CD8-positive, alpha-beta T cell (primary cell): ENCODE measurements at regions of chr19 and their contacts with region 1.

Region 1: GRCh38 chr19:57527136-57527881 is at the start of gene ZNF549:
- DNase-seq: peak; percentile 77 to 95 (median 89)
- ATAC-seq: peak; percentile 98
- H3K4me3 ChIP-seq: peak within 1 kb of the TSS; percentile 97
- H3K4me3 Mint-ChIP-seq: peak within 1 kb of the TSS; percentile 94
- H3K27ac ChIP-seq: peak within 1 kb of the TSS; percentile 80 to 88
- H3K27ac Mint-ChIP-seq: peak within 1 kb of the TSS; percentile 96
- H3K4me1 ChIP-seq: peaks cover 16% of the 10 kb centered on the region
- H3K4me1 Mint-ChIP-seq: peaks cover 32% of the 10 kb centered on the region
- H3K27me3 ChIP-seq: no peaks in the 10 kb centered on the region
- H3K27me3 Mint-ChIP-seq: no peaks in the 10 kb centered on the region
- CTCF ChIP-seq: no peak
- total RNA-seq, gene ZNF549: 14.6 to 17.1 TPM

Region 2: DNA sequence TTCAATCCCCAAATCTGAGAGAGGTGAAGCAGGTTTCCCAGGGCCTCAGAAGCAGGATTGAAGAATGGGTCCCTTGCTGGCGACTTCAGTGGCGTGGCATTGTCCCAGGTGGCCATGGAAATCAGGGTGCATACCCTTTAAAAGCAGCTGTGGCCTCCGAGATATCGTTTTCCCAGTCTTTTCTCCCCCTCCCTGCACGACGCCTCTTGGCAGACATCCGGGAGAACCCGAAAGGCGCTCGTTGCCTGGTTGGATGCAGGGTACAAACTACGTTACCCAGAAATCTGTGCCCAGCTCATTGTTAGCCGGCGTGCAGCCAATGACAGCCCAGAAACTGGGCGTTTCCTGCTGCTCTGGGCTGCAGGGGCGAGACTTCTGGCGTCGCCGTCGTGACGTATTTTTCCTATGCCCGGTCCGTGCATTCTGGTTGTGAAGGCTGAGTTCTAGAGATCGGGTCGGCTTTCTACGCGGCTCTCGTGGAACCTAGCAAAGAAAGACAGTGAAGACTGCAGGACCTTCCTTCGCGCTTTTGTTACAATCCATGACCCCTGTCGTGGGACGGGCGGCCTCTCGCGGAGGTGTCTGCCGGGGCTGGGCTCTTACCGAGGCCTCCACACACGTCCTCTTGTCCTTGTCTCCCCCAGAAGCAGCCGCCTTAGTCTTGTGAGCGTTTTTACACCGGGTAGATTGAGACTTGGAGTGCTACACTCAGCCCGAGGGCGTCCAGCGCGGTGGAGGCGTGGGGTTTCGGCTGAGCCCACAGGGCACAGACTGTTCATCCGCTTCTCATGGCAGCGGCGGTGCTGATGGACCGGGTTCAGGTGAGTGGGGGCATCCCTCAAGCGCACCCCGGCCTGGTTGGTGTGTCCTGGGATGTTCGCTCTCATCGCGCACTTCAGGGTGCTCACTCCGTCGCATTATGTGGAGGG is 176.2 kb before region 1 on chr19 and contains the start of gene ZNF304:
- CTCF ChIA-PET with region 1: no interaction called
- POLR2A ChIA-PET with region 1: no interaction called
- intact Hi-C with region 1: no loop called
- DNase-seq: peak; percentile 58 to 93 (median 81)
- ATAC-seq: peak; percentile 99
- H3K4me3 ChIP-seq: peak within 1 kb of the TSS; percentile 79 to 87
- H3K4me3 Mint-ChIP-seq: peak within 1 kb of the TSS; percentile 96
- H3K27ac ChIP-seq: peak within 1 kb of the TSS; percentile 68 to 73
- H3K27ac Mint-ChIP-seq: peak within 1 kb of the TSS; percentile 93
- H3K4me1 ChIP-seq: peaks cover 13% of the 10 kb centered on the region
- H3K4me1 Mint-ChIP-seq: peaks cover 32% of the 10 kb centered on the region
- H3K27me3 ChIP-seq: peaks cover 0 to 4% of the 10 kb centered on the region in 2 experiments
- H3K27me3 Mint-ChIP-seq: no peaks in the 10 kb centered on the region
- CTCF ChIP-seq: no peak
- total RNA-seq, gene ZNF304: 8.6 TPM

Region 3: GRCh38 chr19:57477191-57478008 is 49.9 kb before region 1 on chr19 and contains the start of gene ZNF772:
- CTCF ChIA-PET with region 1: no interaction called
- POLR2A ChIA-PET with region 1: no interaction called
- intact Hi-C with region 1: loop called (anchors 1 kb)
- DNase-seq: peak; percentile 76 to 95 (median 88)
- ATAC-seq: peak; percentile 99
- H3K4me3 ChIP-seq: peak within 1 kb of the TSS; percentile 78 to 86
- H3K4me3 Mint-ChIP-seq: peak within 1 kb of the TSS; percentile 88
- H3K27ac ChIP-seq: peak within 1 kb of the TSS; percentile 47 to 83
- H3K27ac Mint-ChIP-seq: peak within 1 kb of the TSS; percentile 92
- H3K4me1 ChIP-seq: peaks cover 8% of the 10 kb centered on the region
- H3K4me1 Mint-ChIP-seq: peaks cover 14% of the 10 kb centered on the region
- H3K27me3 ChIP-seq: peaks cover 0 to 2% of the 10 kb centered on the region in 2 experiments
- H3K27me3 Mint-ChIP-seq: peaks cover 2% of the 10 kb centered on the region
- CTCF ChIP-seq: peak; percentile 65
- total RNA-seq, gene ZNF772: 0.41 to 0.97 TPM

Region 4: GRCh38 chr19:57947208-57948134 is 420.2 kb after region 1 on chr19 and contains the start of gene ZNF256:
- CTCF ChIA-PET with region 1: no interaction called
- POLR2A ChIA-PET with region 1: no interaction called
- intact Hi-C with region 1: loop called in 1 of 2 experiments (anchors 1 kb)
- DNase-seq: peak; percentile 72 to 92 (median 86)
- ATAC-seq: peak; percentile 91
- H3K4me3 ChIP-seq: peak within 1 kb of the TSS; percentile 93 to 97
- H3K4me3 Mint-ChIP-seq: peak within 1 kb of the TSS; percentile 93
- H3K27ac ChIP-seq: peak within 1 kb of the TSS; percentile 76 to 90
- H3K27ac Mint-ChIP-seq: peak within 1 kb of the TSS; percentile 95
- H3K4me1 ChIP-seq: peaks cover 16% of the 10 kb centered on the region
- H3K4me1 Mint-ChIP-seq: peaks cover 20% of the 10 kb centered on the region
- H3K27me3 ChIP-seq: no peaks in the 10 kb centered on the region
- H3K27me3 Mint-ChIP-seq: no peaks in the 10 kb centered on the region
- CTCF ChIP-seq: peak; percentile 44
- total RNA-seq, gene ZNF256: 18.3 to 21.0 TPM